Activated naive CD4-positive, alpha-beta T cell treated with anti-CD3 and anti-CD28 coated beads for 36 hours (primary cell): ENCODE measurements at regions of chr1 and their contacts with region 1.

Region 1: GRCh38 chr1:212558693-212559480 is 49.7 kb upstream of the ATF3 start:
- DNase-seq: peak; percentile 94
- H3K4me3 Mint-ChIP-seq: peak overlapping the region; percentile 66
- H3K27ac Mint-ChIP-seq: peak overlapping the region; percentile 92
- H3K4me1 Mint-ChIP-seq: peaks cover 13% of the 10 kb centered on the region
- H3K27me3 Mint-ChIP-seq: peaks cover 12% of the 10 kb centered on the region

Region 2: DNA sequence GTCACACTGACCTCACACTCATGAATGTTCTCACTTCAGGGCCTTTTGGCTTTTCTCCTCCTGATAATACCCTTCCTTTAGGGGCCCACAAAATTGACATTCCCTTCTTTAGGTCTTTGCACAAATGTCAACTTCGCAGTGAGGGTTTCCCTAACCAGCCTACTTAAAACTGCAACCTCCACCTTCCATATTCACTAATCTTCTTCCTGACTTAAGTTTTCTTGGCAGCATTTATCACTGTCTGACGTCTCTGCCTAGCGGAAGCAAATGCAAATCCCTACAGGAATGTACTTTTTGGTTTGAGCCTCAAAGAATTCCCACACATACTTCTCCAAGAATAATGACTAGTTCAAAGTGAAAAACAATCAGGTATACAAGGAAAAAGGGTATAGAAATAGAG is 556.4 kb before region 1 on chr1:
- CTCF ChIA-PET with region 1: no interaction called
- intact Hi-C with region 1: no loop called
- DNase-seq: no peak
- H3K4me3 Mint-ChIP-seq: no peak overlapping the region
- H3K27ac Mint-ChIP-seq: no peak overlapping the region
- H3K4me1 Mint-ChIP-seq: no peaks in the 10 kb centered on the region
- H3K27me3 Mint-ChIP-seq: no peaks in the 10 kb centered on the region

Region 3: DNA sequence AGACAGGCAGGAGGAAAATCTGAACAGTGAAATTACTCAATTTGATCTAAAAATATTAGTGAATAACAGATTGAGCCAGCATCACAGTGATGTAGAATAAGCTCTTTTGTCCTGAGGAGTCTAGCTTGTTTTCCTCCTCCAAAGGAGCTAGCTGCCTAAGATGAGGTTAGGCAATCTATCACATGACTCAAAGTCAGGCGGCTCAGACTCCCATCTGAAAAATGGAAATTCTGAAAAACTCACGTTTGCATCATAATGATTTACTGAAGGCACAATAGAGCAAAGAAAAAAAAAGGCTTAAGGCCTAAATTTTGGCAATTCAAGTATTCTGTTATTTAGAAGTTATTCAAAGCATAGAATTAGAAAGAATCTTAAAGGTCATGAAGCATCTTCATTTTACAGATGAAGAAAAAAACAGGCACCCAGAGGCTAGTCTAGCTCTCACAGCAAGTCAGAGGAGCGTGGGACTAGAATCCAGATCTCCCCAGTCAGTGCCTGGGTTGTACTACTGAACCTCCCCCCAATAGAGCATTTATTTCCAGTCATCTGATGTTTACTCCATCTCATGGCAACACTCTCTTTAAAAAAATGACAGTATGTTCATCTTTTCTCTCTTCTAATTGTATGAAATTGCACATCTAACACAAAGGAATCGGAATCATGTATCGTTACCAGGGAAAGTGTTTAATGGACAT is 12.8 kb before region 1 on chr1:
- CTCF ChIA-PET with region 1: interaction called, 10 read pairs
- intact Hi-C with region 1: no loop called
- DNase-seq: no peak
- H3K4me3 Mint-ChIP-seq: no peak overlapping the region
- H3K27ac Mint-ChIP-seq: no peak overlapping the region
- H3K4me1 Mint-ChIP-seq: no peaks in the 10 kb centered on the region
- H3K27me3 Mint-ChIP-seq: peaks cover 2% of the 10 kb centered on the region